ENCODE measurements at regions of chr16 and their contacts with region 1.

Region 1: DNA sequence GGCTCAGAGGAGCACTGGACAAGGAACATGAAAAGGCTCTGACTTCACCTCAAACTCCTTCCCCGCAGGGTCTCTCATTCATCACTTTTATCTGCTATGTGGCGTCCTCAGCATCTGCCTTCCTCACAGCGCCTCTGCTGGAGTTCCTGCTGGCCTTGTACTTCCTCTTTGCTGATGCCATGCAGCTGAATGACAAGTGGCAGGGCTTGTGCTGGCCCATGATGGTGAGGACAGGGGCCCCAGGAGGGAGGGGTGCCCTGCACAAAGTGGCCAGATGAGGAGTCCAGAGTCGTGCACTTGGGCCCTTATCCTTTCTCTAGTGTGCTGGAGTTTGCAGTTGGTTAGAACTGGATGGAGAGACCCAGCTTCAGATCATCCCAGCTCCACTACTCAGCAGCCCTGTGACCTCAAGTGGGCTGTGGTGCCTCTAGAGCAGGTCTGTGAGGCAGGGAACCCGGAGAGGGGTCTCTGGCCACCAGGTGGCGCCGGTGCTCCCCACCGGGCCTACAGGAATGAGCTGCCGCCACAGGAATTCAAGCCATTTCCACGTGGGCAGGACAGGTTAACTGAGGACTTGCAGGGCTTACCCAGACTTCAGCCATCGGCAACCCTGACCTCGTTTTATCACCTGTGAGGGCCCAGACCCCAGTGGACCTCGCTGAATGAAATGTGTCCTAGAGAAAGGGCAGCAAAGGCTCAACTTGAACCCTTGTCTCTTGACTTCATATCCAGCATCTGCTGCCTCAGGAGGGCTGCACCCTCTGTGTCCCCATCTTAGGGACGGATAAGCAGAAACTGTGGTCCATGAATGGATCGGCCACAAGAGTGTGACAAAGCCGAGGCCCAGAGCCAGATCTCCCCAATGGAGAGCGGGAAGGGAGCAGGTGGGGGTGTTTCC is 4.0 kb downstream of the CMTM3 start:
- DNase-seq: peak; percentile 71
- H3K4me3 ChIP-seq: no peak overlapping the region; the same call in 1 of the 2 replicates
- H3K27ac ChIP-seq: peak overlapping the region; percentile 57
- H3K27me3 ChIP-seq: no peaks in the 10 kb centered on the region
- CTCF ChIP-seq: peak; percentile 94

Region 2: GRCh38 chr16:66406534-66407221 is 201.8 kb before region 1 on chr16:
- CTCF ChIA-PET with region 1: interaction called, 13 read pairs
- POLR2A ChIA-PET with region 1: no interaction called
- DNase-seq: no peak
- H3K4me3 ChIP-seq: peak overlapping the region; percentile 74
- H3K27ac ChIP-seq: peak overlapping the region; percentile 12
- H3K27me3 ChIP-seq: peaks cover 26% of the 10 kb centered on the region
- CTCF ChIP-seq: peak; percentile 85

Region 3: GRCh38 chr16:66596986-66597848 is 11.3 kb before region 1 on chr16:
- CTCF ChIA-PET with region 1: interaction called, 13 read pairs
- POLR2A ChIA-PET with region 1: no interaction called
- DNase-seq: no peak
- H3K4me3 ChIP-seq: no peak overlapping the region
- H3K27ac ChIP-seq: no peak overlapping the region
- H3K27me3 ChIP-seq: peaks cover 13% of the 10 kb centered on the region
- CTCF ChIP-seq: no peak

Region 4: GRCh38 chr16:66650707-66651473 is 42.4 kb after region 1 on chr16:
- CTCF ChIA-PET with region 1: interaction called, 26 read pairs
- POLR2A ChIA-PET with region 1: no interaction called
- DNase-seq: peak; percentile 55
- H3K4me3 ChIP-seq: peak overlapping the region; percentile 5; the same call in 1 of the 2 replicates
- H3K27ac ChIP-seq: no peak overlapping the region
- H3K27me3 ChIP-seq: no peaks in the 10 kb centered on the region
- CTCF ChIP-seq: peak; percentile 96

Region 5: GRCh38 chr16:66728117-66728787 is 119.8 kb after region 1 on chr16:
- CTCF ChIA-PET with region 1: interaction called, 14 read pairs
- POLR2A ChIA-PET with region 1: no interaction called
- DNase-seq: no peak
- H3K4me3 ChIP-seq: no peak overlapping the region
- H3K27ac ChIP-seq: no peak overlapping the region
- H3K27me3 ChIP-seq: no peaks in the 10 kb centered on the region
- CTCF ChIP-seq: peak; percentile 66

Region 6: GRCh38 chr16:67028555-67029248 is 420.2 kb after region 1 on chr16 and contains the start of gene CBFB:
- CTCF ChIA-PET with region 1: no interaction called
- POLR2A ChIA-PET with region 1: no interaction called
- DNase-seq: peak; percentile 57
- H3K4me3 ChIP-seq: peak within 1 kb of the TSS; percentile 83
- H3K27ac ChIP-seq: peak within 1 kb of the TSS; percentile 85
- H3K27me3 ChIP-seq: no peaks in the 10 kb centered on the region
- CTCF ChIP-seq: peak; percentile 11; the same call in 1 of the 2 replicates
- polyA plus RNA-seq, gene CBFB: 35.9 and 46.1 TPM in 2 replicates

Measured in AG04450 (cell line).